Activated CD8-positive, alpha-beta T cell treated with anti-CD3 and anti-CD28 coated beads, Interleukin-2, amount 10 ng/mL, durations not matched to agents 7 days and 5 days (primary cell): ENCODE measurements at regions of chr2 and their contacts with region 1.

Region 1: GRCh38 chr2:64945973-64946768 is 43.0 kb upstream of the SLC1A4 start:
- DNase-seq: peak; percentile 86
- ATAC-seq: peak; percentile 97
- H3K4me3 Mint-ChIP-seq: peak overlapping the region; percentile 71
- H3K27ac Mint-ChIP-seq: peak overlapping the region; percentile 96
- H3K4me1 Mint-ChIP-seq: peaks cover 58% of the 10 kb centered on the region
- H3K27me3 Mint-ChIP-seq: no peaks in the 10 kb centered on the region

Region 2: GRCh38 chr2:64963719-64964118 is 17.5 kb after region 1 on chr2:
- CTCF ChIA-PET with region 1: interaction called, 4 read pairs
- POLR2A ChIA-PET with region 1: interaction called, 10 read pairs
- DNase-seq: no peak
- ATAC-seq: no peak
- H3K4me3 Mint-ChIP-seq: no peak overlapping the region
- H3K27ac Mint-ChIP-seq: no peak overlapping the region
- H3K4me1 Mint-ChIP-seq: no peaks in the 10 kb centered on the region
- H3K27me3 Mint-ChIP-seq: no peaks in the 10 kb centered on the region

Region 3: DNA sequence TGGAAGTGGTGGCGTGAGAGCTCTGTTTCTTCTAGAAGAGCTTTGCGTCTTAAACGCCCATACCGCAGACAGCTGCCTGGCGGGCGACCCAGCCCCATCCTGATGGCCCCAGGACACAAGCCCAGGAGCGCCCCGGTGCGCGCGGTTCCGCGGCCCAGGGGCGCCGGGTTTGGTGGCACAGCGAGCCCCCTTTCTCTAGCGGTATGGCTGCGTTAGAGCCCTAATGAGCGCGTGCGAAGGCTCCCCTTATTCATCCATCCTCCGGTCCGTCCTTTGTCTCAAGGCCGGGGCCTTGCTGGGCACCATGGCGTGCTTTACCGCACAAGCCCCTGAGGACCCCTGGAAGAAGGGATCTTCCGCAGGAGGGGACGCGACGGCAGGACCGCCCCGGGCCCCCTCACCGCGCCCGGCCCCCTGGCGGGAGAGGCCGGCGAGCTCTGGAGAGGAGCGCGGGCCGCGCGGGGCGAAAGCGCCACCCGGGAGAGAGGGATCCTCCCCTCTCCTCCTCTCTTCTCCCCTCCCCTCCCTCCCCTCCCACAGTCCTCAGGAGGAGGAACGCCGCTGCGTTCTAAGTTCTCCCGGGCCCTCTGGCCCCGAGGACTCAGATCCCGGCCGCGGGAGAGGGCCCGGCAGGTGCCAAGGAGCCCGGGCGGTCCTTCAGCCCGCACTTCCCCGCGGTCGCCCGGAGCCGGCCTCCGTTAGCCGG is 42.4 kb after region 1 on chr2:
- CTCF ChIA-PET with region 1: interaction called, 11 read pairs
- POLR2A ChIA-PET with region 1: interaction called, 41 read pairs
- DNase-seq: peak; percentile 87
- ATAC-seq: peak; percentile 47
- H3K4me3 Mint-ChIP-seq: peak overlapping the region; percentile 74
- H3K27ac Mint-ChIP-seq: peak overlapping the region; percentile 76
- H3K4me1 Mint-ChIP-seq: peaks cover 66% of the 10 kb centered on the region
- H3K27me3 Mint-ChIP-seq: peaks cover 14% of the 10 kb centered on the region

Region 4: GRCh38 chr2:65299246-65299645 is 353.1 kb after region 1 on chr2:
- CTCF ChIA-PET with region 1: no interaction called
- POLR2A ChIA-PET with region 1: no interaction called
- DNase-seq: peak; percentile 50
- ATAC-seq: no peak
- H3K4me3 Mint-ChIP-seq: peak overlapping the region; percentile 28
- H3K27ac Mint-ChIP-seq: no peak overlapping the region
- H3K4me1 Mint-ChIP-seq: peaks cover 58% of the 10 kb centered on the region
- H3K27me3 Mint-ChIP-seq: peaks cover 32% of the 10 kb centered on the region